RWPE1 (cell line): ENCODE measurements at regions of chr6 and their contacts with region 1.

Region 1: DNA sequence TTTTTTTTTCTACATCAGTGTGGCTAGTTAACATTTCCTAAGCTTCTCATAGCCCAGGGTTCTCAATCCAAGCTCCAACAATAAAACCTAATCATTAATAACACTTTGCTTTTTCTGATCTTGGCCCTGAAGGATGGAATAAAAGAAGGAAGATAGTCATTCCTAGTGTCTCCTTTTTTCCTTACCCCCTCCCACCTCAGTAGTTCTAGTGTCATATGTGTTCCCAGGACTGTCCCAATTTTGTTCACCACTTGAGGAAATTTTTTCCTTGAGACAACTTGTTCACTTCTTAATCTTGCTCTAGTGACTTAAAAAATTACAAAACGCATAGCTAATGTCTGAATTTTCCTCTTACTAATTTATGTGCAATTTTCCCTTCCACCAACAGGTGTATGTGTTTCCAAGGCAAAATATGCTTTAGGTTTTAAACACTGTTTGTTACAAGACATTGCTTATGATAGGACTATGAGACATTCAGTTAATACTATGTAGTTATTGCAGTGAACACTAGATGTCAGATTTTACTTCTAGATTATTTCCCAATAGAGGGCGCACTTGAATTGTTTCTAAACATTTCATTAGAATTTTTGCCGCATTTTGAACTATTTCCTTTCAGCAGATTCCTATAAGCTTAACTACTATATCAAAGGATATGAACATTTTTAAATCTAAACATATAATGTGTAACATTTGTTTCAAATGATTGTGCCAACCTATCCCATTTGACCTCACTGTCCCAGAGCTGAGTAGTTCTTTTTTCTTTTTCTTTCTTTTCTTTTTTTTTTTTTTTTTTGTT is 18.5 kb upstream of the C6orf141 start:
- DNase-seq: peak; percentile 75
- H3K27ac ChIP-seq: 0 out of 2 replicates have a peak overlapping the region, but pooled peaks have one; percentile 37
- CTCF ChIP-seq: peak; percentile 87

Region 2: GRCh38 chr6:49430187-49430586 is 101.8 kb before region 1 on chr6:
- CTCF ChIA-PET with region 1: no interaction called
- POLR2A ChIA-PET with region 1: no interaction called
- DNase-seq: no peak
- H3K27ac ChIP-seq: no peak overlapping the region
- CTCF ChIP-seq: no peak

Region 3: DNA sequence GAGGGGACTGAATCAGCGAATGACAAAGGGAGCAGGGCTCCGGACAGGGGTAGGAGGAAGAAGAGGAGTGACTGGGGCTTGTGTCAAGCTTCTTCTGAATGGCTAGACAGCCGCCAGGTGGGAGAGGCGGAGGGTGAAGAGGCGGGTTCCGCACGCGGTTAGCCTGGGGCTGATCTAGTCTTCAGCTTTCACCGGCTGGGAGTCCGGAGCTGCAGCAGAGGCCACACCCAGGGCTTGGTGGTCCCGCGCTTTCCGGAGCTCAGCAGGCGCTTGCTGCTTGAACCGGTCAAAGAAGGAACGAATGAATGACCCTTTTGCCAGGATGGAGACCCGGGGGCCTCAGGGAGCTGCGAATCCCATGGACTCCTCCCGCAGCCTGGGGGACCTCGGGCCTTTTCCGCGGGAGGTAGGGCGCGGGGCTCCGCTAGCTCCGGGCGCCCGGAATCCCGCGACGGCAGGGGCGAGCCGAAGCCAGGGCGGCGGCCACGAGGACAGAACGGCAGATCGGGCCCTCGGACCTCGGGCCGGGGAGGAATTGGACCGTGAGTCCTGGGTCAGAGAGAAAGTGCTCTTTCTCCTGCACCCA is 18.6 kb after region 1 on chr6 and contains the start of gene C6orf141:
- CTCF ChIA-PET with region 1: interaction called, 18 read pairs
- POLR2A ChIA-PET with region 1: no interaction called
- DNase-seq: peak; percentile 74
- H3K27ac ChIP-seq: peak within 1 kb of the TSS; percentile 93
- CTCF ChIP-seq: no peak

Region 4: DNA sequence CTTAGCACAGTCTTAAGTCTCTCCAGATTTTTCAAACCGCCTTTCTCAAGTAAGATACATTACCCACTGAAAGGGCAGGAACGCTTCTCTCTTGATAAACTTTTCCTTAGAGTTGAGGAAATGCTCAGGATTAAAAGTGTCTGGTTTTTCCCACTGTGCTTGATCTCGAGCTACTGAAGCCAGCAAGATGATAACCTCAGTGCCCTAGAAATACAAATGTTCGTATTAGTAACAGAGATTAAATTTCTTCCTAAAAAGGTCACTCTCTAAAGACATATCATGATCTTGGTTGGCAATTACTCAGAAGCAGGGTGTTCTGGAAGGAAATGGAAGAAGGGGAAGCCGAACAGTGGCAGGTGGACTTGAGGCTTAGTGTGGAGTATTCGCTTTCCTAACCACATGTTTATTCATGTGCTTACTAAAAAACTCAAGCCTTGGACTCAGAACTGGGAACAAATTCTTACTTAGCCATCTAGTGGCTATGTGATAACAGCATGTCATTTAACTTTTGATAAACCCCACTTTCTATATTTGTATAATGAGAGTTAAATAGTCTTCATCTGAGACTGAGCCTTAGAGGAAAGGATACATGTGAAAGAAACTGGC is 38.6 kb after region 1 on chr6:
- CTCF ChIA-PET with region 1: interaction called, 13 read pairs
- POLR2A ChIA-PET with region 1: no interaction called
- DNase-seq: no peak
- H3K27ac ChIP-seq: no peak overlapping the region
- CTCF ChIP-seq: peak; percentile 16

Region 5: GRCh38 chr6:49692534-49692933 is 160.6 kb after region 1 on chr6:
- CTCF ChIA-PET with region 1: no interaction called
- POLR2A ChIA-PET with region 1: no interaction called
- DNase-seq: no peak
- H3K27ac ChIP-seq: no peak overlapping the region
- CTCF ChIP-seq: no peak